ENCODE measurements at regions of chr1 and their contacts with region 1.

Region 1: GRCh38 chr1:25037174-25038074 is 107.3 kb upstream of the RUNX3 start:
- DNase-seq: peak; percentile 72
- ATAC-seq: peak; percentile 45
- H3K4me3 Mint-ChIP-seq: peak overlapping the region; percentile 22
- H3K27ac Mint-ChIP-seq: peak overlapping the region; percentile 65
- H3K4me1 Mint-ChIP-seq: peaks cover 59% of the 10 kb centered on the region
- H3K27me3 Mint-ChIP-seq: no peaks in the 10 kb centered on the region
- CTCF ChIP-seq: peak; percentile 85

Region 2: DNA sequence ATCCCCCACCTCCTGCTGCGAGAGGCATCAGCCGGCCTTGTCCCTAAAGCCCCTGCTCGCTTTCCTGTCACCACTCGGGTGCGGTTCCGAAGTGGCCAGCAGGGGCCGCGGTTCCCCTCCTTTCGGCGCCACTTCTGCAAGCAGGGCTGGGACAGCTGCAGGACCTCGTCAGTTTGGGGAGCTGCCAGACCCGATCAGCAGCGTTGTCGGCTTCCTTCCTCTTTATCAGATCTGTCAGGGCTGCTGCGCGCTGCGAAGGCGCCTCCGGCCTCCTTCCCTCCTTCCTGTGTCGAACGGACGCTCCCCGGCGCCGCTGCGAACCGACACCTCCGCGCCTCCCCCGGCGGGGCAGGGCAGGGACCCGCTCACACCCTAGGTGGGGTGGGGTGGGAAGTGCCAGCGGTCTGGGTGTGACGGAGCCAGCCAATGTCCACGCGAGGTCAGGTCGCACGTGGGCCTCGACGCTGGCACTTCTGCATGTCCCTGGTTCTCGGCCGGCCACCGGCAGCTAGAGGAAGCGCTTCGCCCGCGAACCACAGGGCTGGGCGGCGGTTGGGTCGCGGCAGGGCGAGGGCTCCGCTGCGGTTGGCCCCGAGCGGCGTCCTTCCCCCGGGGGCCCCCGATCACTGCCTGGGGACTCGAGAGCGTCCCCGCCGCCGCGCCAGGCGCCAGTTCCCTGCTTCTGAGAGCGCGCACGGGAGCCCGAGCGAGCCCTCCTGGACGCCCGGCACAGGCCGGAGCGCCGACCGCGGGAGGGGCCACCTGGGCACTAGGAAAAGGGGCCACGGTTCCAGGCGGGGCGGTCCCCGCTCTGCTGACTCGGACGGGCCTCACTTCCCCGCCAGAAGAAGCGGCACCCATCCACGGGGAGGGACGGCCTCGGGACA is 189.2 kb before region 1 on chr1:
- CTCF ChIA-PET with region 1: interaction called, 26 read pairs
- POLR2A ChIA-PET with region 1: no interaction called
- intact Hi-C with region 1: loop called (anchors 10 kb)
- DNase-seq: peak; percentile 96
- ATAC-seq: peak; percentile 96
- H3K4me3 Mint-ChIP-seq: peak overlapping the region; percentile 59
- H3K27ac Mint-ChIP-seq: no peak overlapping the region
- H3K4me1 Mint-ChIP-seq: peaks cover 7% of the 10 kb centered on the region
- H3K27me3 Mint-ChIP-seq: peaks cover 1% of the 10 kb centered on the region
- CTCF ChIP-seq: peak; percentile 94

Region 3: GRCh38 chr1:24955161-24955560 is 82.3 kb before region 1 on chr1:
- CTCF ChIA-PET with region 1: interaction called, 169 read pairs
- POLR2A ChIA-PET with region 1: interaction called, 159 read pairs
- intact Hi-C with region 1: no loop called
- DNase-seq: peak; percentile 92
- ATAC-seq: peak; percentile 84
- H3K4me3 Mint-ChIP-seq: peak overlapping the region; percentile 99
- H3K27ac Mint-ChIP-seq: peak overlapping the region; percentile 97
- H3K4me1 Mint-ChIP-seq: peaks cover 89% of the 10 kb centered on the region
- H3K27me3 Mint-ChIP-seq: no peaks in the 10 kb centered on the region
- CTCF ChIP-seq: no peak

Region 4: DNA sequence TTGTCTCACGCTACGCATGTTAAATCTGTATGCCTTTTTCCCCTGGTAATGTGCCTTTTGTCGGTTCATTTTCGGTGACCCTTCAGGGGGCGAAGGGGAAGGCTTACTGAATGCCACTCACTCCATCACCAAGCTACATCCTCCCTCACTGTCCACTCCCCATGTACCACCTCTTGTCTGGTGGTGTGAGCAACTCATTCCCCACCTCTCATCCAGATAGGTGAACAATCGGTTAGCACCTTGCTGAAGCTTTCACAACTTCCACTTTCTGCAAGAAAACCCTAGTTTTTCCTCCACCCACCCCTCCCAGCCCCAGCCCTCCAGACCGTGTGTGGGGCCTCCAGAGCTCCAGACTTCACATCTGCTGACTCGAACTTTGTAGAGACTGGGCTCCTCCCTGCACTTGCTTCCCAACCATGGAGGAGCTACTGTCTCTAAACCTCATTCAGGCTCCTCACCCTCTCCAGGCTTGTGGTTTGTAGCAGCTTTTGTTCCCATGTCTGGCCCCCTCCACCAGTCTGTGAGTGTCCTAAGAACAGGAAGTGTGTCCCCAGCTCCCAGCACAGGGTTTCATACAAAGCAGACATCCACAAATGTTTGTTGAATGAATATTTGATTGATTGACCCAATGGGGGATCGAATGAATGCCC is 58.9 kb before region 1 on chr1:
- CTCF ChIA-PET with region 1: interaction called, 37 read pairs
- POLR2A ChIA-PET with region 1: interaction called, 4 read pairs
- intact Hi-C with region 1: no loop called
- DNase-seq: no peak
- ATAC-seq: peak; percentile 55
- H3K4me3 Mint-ChIP-seq: peak overlapping the region; percentile 12
- H3K27ac Mint-ChIP-seq: peak overlapping the region; percentile 59
- H3K4me1 Mint-ChIP-seq: peaks cover 72% of the 10 kb centered on the region
- H3K27me3 Mint-ChIP-seq: no peaks in the 10 kb centered on the region
- CTCF ChIP-seq: no peak

Region 5: DNA sequence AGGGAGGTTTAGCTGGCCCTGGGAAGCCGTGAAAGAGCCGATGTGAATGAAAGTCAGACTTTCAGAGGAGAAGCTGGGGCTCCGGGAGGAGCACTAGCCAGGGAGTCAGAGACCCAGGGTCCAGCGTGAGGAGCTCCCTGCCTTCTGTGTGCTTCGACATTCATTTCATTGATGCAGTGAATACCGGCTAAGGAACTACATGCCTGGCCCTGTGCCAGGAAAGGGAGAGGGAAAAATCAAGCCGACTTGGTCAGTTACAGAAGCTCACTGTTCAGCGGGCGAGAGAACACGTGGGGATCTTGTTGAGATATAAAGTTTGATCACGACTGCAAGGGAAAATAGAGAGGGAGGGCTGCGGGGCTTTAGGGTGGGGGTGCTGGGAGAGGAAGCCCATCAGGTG is 30.7 kb before region 1 on chr1:
- CTCF ChIA-PET with region 1: interaction called, 23 read pairs
- POLR2A ChIA-PET with region 1: interaction called, 4 read pairs
- intact Hi-C with region 1: no loop called
- DNase-seq: no peak
- ATAC-seq: no peak
- H3K4me3 Mint-ChIP-seq: no peak overlapping the region
- H3K27ac Mint-ChIP-seq: peak overlapping the region; percentile 74
- H3K4me1 Mint-ChIP-seq: peaks cover 86% of the 10 kb centered on the region
- H3K27me3 Mint-ChIP-seq: no peaks in the 10 kb centered on the region
- CTCF ChIP-seq: no peak

Region 6: DNA sequence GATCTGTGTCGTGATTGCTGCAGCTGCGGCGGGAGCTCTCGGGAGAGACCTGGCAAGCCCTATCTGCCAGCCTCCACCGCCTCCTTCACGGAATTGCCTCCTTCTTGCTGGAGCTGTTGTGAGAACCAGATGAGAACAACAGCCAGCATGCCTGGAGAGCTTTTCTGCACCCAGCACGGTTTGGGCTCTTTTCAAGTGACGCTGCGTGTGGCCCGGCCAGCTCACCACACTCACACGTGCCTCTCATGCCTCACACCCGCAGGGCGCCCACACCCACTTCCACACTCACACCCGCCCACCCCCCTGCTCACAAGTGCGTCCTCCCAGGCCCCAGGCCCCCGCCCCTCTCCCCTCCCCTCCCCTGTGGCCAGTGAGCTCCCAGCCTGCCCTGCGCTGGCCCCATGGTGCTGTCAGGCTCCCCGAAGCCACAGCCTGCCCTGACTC is 28.4 kb after region 1 on chr1:
- CTCF ChIA-PET with region 1: interaction called, 11 read pairs
- POLR2A ChIA-PET with region 1: interaction called, 3 read pairs
- intact Hi-C with region 1: no loop called
- DNase-seq: peak; percentile 51
- ATAC-seq: peak; percentile 60
- H3K4me3 Mint-ChIP-seq: no peak overlapping the region
- H3K27ac Mint-ChIP-seq: no peak overlapping the region
- H3K4me1 Mint-ChIP-seq: peaks cover 27% of the 10 kb centered on the region
- H3K27me3 Mint-ChIP-seq: no peaks in the 10 kb centered on the region
- CTCF ChIP-seq: no peak

Measured in activated CD8-positive, alpha-beta T cell treated with anti-CD3 and anti-CD28 coated beads for 36 hours (primary cell).